Ovary (tissue), 10 donors: ENCODE measurements at regions of chr5 and their contacts with region 1.

Region 1: GRCh38 chr5:145203193-145203592 is 631.9 kb downstream of the PRELID2 start:
- DNase-seq: no peak
- H3K4me3 ChIP-seq: no peak overlapping the region
- H3K27ac ChIP-seq: no peak overlapping the region
- H3K4me1 ChIP-seq: no peaks in the 10 kb centered on the region
- H3K27me3 ChIP-seq: no peaks in the 10 kb centered on the region
- CTCF ChIP-seq: no peak
- EP300 ChIP-seq: no peak
- POLR2A ChIP-seq: no peak

Region 2: DNA sequence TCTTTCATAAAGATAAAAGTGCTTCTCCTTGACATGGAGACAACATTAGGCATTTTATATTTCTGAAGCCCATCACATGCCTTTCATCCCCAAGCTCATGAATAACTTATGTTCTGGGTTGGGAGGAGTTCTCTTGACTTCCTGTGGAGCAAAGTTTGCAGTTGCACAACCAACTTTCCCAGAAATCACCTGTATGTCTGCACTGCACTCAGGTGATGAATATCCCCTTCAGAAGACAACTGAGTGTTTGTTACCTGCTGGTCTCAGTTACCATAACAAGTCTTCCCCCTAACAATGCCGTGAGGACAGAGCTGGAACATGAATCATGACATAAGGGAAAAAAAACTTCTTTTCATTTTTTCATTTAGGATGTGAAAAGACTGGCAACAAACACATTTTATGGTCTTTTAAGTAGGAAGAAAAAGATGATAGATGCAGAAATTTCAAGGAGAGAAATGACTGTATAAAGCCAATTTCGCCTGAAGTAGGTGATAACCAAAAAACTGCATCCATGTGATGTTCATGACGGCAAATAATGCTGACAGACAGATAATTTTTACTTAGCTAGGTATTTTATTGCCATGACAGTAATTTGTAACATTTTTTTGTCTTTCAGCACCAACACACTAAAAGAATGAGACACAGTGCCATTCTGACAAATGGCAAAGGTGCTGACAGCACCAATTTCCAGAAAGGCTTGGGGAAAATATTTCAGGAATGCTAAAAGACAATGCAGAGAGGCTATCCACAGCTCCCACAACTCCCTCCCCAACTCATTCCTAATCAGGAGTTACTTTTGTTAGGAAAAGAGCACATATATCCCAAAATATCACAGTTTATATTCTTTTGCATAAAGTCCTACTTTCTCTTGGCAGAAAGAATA is 24.3 kb before region 1 on chr5:
- intact Hi-C with region 1: no loop called
- DNase-seq: no peak
- H3K4me3 ChIP-seq: no peak overlapping the region
- H3K27ac ChIP-seq: no peak overlapping the region
- H3K4me1 ChIP-seq: no peaks in the 10 kb centered on the region
- H3K27me3 ChIP-seq: no peaks in the 10 kb centered on the region
- CTCF ChIP-seq: no peak
- EP300 ChIP-seq: no peak
- POLR2A ChIP-seq: no peak

Region 3: GRCh38 chr5:145237843-145238242 is 34.6 kb after region 1 on chr5:
- intact Hi-C with region 1: loop called in 1 of 4 experiments (anchors 1 kb)
- DNase-seq: no peak
- H3K4me3 ChIP-seq: no peak overlapping the region
- H3K27ac ChIP-seq: no peak overlapping the region
- H3K4me1 ChIP-seq: no peaks in the 10 kb centered on the region
- H3K27me3 ChIP-seq: no peaks in the 10 kb centered on the region
- CTCF ChIP-seq: no peak
- EP300 ChIP-seq: no peak
- POLR2A ChIP-seq: no peak